MCF 10A (cell line): ENCODE measurements at regions of chr22 and their contacts with region 1.

Region 1: DNA sequence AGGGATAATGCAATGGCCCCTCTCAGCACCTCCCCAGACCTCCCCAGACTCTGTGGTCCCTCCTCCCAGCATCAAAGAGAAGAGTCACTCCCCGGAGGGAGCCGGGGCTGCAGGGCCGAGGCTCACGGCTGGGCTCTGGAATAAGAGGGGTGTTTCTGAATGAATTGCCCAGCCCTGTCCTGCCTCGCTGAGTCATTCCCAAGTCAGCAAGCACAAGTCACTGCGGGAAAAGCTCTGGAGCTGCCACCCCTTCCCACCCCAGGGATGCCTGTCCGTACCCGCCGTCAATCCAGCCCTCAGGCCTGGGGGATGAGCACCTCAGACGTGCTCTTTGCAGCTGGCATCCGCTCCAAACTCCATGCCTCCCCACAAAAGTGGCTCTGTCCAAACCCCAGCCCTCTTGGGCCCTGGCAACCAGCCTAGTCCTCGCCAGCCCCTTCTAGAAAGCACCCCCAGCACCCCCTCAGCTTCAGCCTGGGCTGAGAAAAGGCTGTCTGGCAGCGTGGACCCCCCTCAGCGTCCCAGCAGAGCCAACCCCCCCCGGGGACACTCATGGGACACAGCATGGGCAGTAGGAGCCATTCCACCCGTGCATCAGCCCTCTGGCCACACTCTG is 22.7 kb downstream of the CELSR1 start:
- DNase-seq: peak; percentile 93
- H3K4me3 Mint-ChIP-seq: peak overlapping the region; percentile 19
- H3K27ac Mint-ChIP-seq: peak overlapping the region; percentile 88
- H3K4me1 Mint-ChIP-seq: peaks cover 23% of the 10 kb centered on the region
- H3K27me3 Mint-ChIP-seq: no peaks in the 10 kb centered on the region
- CTCF ChIP-seq: no peak

Region 2: GRCh38 chr22:46482056-46482675 is 32.5 kb before region 1 on chr22:
- CTCF ChIA-PET with region 1: no interaction called
- POLR2A ChIA-PET with region 1: interaction called, 10 read pairs
- intact Hi-C with region 1: no loop called
- DNase-seq: no peak
- H3K4me3 Mint-ChIP-seq: no peak overlapping the region
- H3K27ac Mint-ChIP-seq: no peak overlapping the region
- H3K4me1 Mint-ChIP-seq: no peaks in the 10 kb centered on the region
- H3K27me3 Mint-ChIP-seq: no peaks in the 10 kb centered on the region
- CTCF ChIP-seq: no peak

Region 3: GRCh38 chr22:46501701-46502100 is 13.0 kb before region 1 on chr22:
- CTCF ChIA-PET with region 1: interaction called, 4 read pairs
- POLR2A ChIA-PET with region 1: interaction called, 13 read pairs
- intact Hi-C with region 1: no loop called
- DNase-seq: peak; percentile 65
- H3K4me3 Mint-ChIP-seq: no peak overlapping the region
- H3K27ac Mint-ChIP-seq: peak overlapping the region; percentile 75
- H3K4me1 Mint-ChIP-seq: peaks cover 17% of the 10 kb centered on the region
- H3K27me3 Mint-ChIP-seq: no peaks in the 10 kb centered on the region
- CTCF ChIP-seq: no peak

Region 4: GRCh38 chr22:46528121-46528610 is 13.5 kb after region 1 on chr22:
- CTCF ChIA-PET with region 1: interaction called, 3 read pairs
- POLR2A ChIA-PET with region 1: interaction called, 39 read pairs
- intact Hi-C with region 1: no loop called
- DNase-seq: peak; percentile 98
- H3K4me3 Mint-ChIP-seq: peak overlapping the region; percentile 39
- H3K27ac Mint-ChIP-seq: peak overlapping the region; percentile 82
- H3K4me1 Mint-ChIP-seq: peaks cover 72% of the 10 kb centered on the region
- H3K27me3 Mint-ChIP-seq: no peaks in the 10 kb centered on the region
- CTCF ChIP-seq: no peak